ENCODE measurements at regions of chr15 and their contacts with region 1.

Region 1: DNA sequence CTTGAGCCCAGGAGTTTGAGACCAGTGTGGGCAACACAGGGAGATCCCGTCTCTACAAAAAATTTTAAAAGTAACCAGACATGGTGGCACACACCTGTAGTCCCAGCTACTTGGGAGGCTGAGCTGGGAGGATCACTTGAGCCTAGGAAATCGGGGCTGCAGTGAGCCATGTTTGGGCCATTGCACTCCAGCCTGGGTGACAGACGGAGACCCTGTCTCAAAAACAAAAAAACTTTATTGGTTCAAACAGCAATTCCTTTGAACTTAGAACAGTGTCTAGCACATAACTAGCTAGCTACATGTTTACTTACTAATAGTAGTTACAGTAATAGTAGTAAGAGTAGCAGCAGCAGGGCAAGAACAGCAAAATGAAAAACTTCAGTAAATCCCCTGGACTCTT is 10.1 kb downstream of the HAUS2 start:
- DNase-seq: no peak
- ATAC-seq: no peak
- H3K4me3 ChIP-seq: no peak overlapping the region
- H3K4me1 ChIP-seq: no peaks in the 10 kb centered on the region
- CTCF ChIP-seq: no peak

Region 2: GRCh38 chr15:42495361-42496212 is 63.2 kb before region 1 on chr15 and contains the start of gene SNAP23:
- intact Hi-C with region 1: no loop called
- DNase-seq: peak; percentile 95 to 96 (median 96)
- ATAC-seq: peak; percentile 93
- H3K4me3 ChIP-seq: peak within 1 kb of the TSS; percentile 33
- H3K4me1 ChIP-seq: peaks cover 34% of the 10 kb centered on the region
- CTCF ChIP-seq: no peak
- total RNA-seq, gene SNAP23: 65.3 to 97.9 (median 90.3) TPM

Region 3: DNA sequence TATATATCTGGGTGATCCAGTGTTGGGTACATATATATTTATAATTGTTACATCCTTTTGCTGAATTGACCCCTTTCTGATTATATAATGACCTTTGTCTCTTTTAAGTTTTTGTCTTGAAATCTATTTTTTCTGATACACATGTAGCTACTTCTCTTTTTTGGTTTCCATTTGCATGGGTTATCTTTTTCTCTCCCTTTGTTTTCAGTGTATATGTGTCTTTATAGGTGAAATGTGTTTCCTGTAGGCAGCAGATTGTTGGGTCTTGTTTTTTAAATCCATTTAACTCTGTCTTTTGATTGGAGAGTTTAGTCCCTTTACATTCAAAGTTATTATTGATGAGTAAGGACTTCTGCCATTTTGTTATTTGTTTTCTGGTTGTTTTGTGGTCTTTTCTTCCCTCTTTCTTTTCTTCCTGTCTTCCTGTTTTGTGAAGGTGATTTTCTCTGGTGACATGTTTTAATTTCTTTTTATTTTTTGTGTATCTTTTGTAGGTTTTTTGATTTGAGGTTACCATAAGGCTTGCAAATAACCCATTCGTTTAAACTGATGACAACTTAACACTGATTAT is 73.5 kb after region 1 on chr15:
- intact Hi-C with region 1: loop called in 1 of 2 experiments (anchors 10 kb)
- DNase-seq: no peak
- ATAC-seq: no peak
- H3K4me3 ChIP-seq: no peak overlapping the region
- H3K4me1 ChIP-seq: no peaks in the 10 kb centered on the region
- CTCF ChIP-seq: no peak

Measured in mucosa of descending colon (tissue), 3 donors.